ENCODE measurements at regions of chr7 and their contacts with region 1.

Region 1: DNA sequence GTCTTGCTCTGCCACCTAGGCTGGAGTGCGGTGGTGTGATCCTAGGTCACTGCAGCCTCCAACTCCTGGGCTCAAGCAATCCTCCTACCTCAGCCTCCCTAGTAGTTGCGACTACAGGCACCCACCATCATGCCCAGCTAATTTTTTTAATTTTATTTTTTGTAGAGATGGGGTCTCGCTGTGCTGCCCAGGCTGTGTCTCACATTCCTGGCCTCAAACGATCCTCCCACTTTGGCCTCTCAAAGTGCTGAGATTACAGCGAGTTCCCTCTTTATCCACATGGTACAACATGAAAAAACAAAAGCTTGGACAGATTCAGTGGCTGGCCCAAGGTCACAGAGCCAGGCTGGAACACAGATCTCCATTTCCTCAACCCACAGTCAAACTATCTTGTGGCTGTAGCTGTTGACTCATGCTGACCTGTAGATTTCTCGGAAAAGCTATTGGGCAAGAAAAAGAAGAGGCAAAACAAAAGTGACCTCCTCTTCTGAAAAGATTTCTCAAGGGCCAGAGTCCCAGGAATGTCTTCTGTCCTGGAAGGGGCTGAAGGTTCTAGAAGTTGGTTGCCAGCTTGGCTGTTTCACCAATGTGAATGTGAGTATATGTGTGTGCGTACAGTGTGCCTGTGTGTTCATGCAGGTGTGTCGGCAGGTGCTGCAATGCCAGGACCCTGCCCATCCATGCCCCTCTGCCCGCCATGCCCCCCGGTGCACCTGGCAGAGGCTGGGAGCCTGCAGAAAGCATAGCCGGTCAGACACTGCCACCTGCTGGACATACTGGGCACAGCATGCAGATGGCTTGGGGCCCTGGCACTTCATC is 28.4 kb downstream of the TMEM130 start:
- DNase-seq: peak; percentile 44 to 74 (median 57)
- H3K4me3 ChIP-seq: no peak overlapping the region
- H3K4me3 Mint-ChIP-seq: no peak overlapping the region
- H3K27ac ChIP-seq: no peak overlapping the region
- H3K27ac Mint-ChIP-seq: no peak overlapping the region
- H3K4me1 ChIP-seq: no peaks in the 10 kb centered on the region
- H3K4me1 Mint-ChIP-seq: no peaks in the 10 kb centered on the region
- H3K27me3 ChIP-seq: no peaks in the 10 kb centered on the region
- H3K27me3 Mint-ChIP-seq: peaks cover 12 to 21% of the 10 kb centered on the region in 2 donors

Region 2: DNA sequence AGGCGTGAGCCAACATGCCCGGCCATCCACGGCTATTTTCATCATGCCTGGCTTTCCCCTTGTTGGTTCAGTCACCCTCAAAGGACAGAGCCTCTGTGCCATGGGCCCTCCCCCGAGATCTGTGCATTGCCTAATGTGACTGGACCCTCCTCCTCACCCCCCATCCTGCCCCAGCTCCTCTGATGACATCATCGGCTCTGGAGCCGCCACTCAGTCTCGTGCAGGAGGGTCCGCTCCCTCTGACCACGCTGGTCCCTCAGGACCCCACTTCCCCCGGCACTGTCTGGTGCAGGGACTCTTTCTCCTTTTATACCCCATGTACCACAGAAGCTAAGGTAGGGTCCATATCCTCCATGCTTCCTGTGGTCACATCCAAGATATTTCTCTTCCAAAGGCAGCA is 407.3 kb before region 1 on chr7:
- CTCF ChIA-PET with region 1: interaction called, 22 read pairs
- POLR2A ChIA-PET with region 1: no interaction called
- DNase-seq: no peak
- H3K4me3 ChIP-seq: no peak overlapping the region
- H3K4me3 Mint-ChIP-seq: no peak overlapping the region
- H3K27ac ChIP-seq: no peak overlapping the region
- H3K27ac Mint-ChIP-seq: peak overlapping the region in 1 of 8 donors; percentile 42
- H3K4me1 ChIP-seq: no peaks in the 10 kb centered on the region
- H3K4me1 Mint-ChIP-seq: peaks cover 8 to 11% (median 9%) of the 10 kb centered on the region in 3 donors
- H3K27me3 ChIP-seq: no peaks in the 10 kb centered on the region
- H3K27me3 Mint-ChIP-seq: peaks cover 5 to 7% of the 10 kb centered on the region in 2 donors

Measured in CD8-positive, alpha-beta memory T cell (primary cell).